ENCODE measurements at regions of chr16 and their contacts with region 1.

Region 1: DNA sequence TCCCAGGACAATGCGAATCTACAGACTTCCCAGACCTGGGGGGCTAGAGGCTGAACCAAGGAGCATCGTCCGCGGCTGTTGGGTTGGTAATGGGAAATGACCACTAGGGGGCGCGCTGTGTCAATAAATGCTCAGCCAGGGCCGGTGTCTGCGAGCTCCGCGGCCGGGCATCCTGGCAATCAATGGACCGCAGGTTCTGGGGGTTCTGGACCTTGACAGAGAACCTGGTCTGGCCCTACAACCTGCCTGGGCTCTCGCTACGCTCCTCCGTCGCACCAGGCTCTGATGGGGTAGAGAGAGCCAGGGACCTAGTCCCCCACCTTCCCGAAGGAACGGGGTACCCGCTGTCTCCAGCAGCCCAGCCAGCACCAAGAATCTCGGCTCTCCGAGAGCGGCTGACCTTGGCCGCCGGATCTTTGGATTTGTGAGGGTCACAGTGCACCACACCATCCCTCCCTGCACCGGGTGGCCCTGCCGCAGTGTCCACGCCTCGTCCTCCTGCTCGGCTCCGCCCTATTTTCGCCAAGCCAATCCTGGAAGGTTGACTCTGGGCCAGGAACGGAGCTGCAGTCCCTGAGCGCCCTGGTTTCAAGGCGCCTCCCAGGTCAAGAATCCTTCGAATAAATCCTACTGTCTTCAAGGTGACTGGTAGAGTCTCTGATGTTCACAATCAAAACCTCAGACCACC is 20.4 kb upstream of the BEAN1 start:
- DNase-seq: peak; percentile 90
- H3K4me3 ChIP-seq: peak overlapping the region; percentile 77 to 82
- H3K27ac ChIP-seq: peak overlapping the region; percentile 56 to 60
- H3K4me1 ChIP-seq: peaks cover 6 to 15% of the 10 kb centered on the region in 2 experiments; a peak in 3 of 4 replicates
- H3K27me3 ChIP-seq: no peaks in the 10 kb centered on the region
- CTCF ChIP-seq: peak; percentile 84
- EP300 ChIP-seq: no peak
- RAD21 ChIP-seq: peak; percentile 93

Region 2: GRCh38 chr16:66223176-66223780 is 183.4 kb before region 1 on chr16:
- CTCF ChIA-PET with region 1: no interaction called
- POLR2A ChIA-PET with region 1: no interaction called
- DNase-seq: no peak
- H3K4me3 ChIP-seq: no peak overlapping the region
- H3K27ac ChIP-seq: no peak overlapping the region
- H3K4me1 ChIP-seq: no peaks in the 10 kb centered on the region
- H3K27me3 ChIP-seq: peaks cover 4% of the 10 kb centered on the region; the same call in 1 of the 2 replicates
- CTCF ChIP-seq: no peak
- EP300 ChIP-seq: no peak
- RAD21 ChIP-seq: no peak

Region 3: DNA sequence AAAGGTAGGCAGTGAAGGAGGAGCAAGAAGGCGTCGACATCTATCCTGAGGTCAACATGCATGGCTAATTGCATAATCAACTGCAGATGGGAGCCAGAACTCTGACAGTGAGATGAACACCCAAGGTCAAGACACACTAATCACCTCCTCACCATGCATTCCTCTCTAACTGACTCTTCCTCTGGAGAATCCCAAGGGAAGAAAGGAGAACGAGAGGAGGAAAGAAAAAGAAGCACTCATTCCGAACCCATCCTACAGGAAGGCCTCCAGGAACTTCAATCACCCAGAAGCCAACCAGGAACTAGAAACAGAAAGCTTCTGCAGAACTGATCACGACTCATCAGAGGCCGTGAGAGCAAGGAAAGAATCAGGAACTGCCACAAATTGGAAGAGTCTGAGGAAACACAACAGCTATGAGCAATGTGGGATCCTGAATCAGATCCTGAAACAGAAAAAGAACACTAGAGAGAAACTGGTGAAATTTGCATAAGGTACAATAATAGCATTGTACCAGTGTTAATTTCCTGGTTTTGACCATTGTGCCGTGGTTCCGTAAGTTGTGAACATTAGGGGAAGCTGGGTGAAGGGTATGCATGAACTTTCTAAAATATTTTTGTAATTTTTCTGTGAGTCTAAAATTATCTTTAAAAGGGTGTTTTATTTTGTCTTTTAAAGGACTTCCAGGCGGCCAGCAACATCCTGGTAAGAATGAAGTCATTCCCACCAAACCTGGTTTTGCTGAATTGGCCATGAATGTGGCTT is 10.4 kb after region 1 on chr16:
- CTCF ChIA-PET with region 1: interaction called, 14 read pairs
- POLR2A ChIA-PET with region 1: no interaction called
- DNase-seq: no peak
- H3K4me3 ChIP-seq: no peak overlapping the region
- H3K27ac ChIP-seq: no peak overlapping the region
- H3K4me1 ChIP-seq: no peaks in the 10 kb centered on the region
- H3K27me3 ChIP-seq: no peaks in the 10 kb centered on the region
- CTCF ChIP-seq: no peak
- EP300 ChIP-seq: no peak
- RAD21 ChIP-seq: no peak

Region 4: GRCh38 chr16:66455970-66456369 is 49.3 kb after region 1 on chr16:
- CTCF ChIA-PET with region 1: interaction called, 11 read pairs
- POLR2A ChIA-PET with region 1: no interaction called
- DNase-seq: no peak
- H3K4me3 ChIP-seq: no peak overlapping the region
- H3K27ac ChIP-seq: no peak overlapping the region
- H3K4me1 ChIP-seq: no peaks in the 10 kb centered on the region
- H3K27me3 ChIP-seq: peaks cover 6% of the 10 kb centered on the region; the same call in 1 of the 2 replicates
- CTCF ChIP-seq: no peak
- EP300 ChIP-seq: no peak
- RAD21 ChIP-seq: no peak

Region 5: DNA sequence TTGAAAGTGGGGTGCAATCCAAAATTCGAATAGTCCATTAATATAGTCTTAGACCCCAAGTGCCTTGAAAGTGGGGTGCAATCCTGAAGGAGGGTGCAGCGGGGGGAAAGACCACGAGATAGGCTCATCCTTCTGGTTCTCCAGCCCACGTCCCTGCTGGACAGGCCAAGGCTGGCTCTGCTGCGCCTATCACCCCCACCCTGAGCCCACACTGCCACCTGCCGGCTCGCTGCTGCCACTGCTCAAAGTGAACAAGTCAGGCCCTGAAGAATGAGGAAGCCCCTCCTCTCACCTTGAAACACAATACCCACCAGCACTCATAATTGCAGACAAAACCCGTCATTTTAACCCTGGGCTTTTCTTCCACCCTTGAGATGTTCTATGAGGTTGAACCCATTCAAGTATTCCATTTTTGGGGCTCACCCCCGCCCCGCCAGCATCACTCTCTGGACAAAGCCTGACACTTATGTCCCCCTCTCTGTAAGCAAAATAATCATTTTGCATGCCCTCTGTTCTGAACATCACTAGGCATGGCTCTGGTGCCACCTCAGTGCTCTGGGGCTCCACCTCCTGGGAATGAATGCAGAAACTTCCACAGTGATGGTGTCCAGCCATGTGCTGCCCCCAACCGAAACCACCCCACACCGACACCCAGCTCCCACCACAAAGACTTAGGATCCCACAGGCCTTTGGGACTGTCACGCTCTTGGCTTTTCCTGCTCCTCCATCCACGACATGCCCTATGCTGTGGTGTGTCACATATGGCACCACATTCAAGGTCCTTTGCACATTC is 77.2 kb after region 1 on chr16:
- CTCF ChIA-PET with region 1: interaction called, 299 read pairs
- POLR2A ChIA-PET with region 1: interaction called, 3 read pairs
- DNase-seq: peak; percentile 90
- H3K4me3 ChIP-seq: peak overlapping the region in 1 of 2 experiments; percentile 41; a peak in 1 of 4 replicates
- H3K27ac ChIP-seq: no peak overlapping the region
- H3K4me1 ChIP-seq: peaks cover 10% of the 10 kb centered on the region in 2 experiments; a peak in 2 of 4 replicates
- H3K27me3 ChIP-seq: no peaks in the 10 kb centered on the region
- CTCF ChIP-seq: peak; percentile 95
- EP300 ChIP-seq: no peak
- RAD21 ChIP-seq: peak; percentile 93

Region 6: DNA sequence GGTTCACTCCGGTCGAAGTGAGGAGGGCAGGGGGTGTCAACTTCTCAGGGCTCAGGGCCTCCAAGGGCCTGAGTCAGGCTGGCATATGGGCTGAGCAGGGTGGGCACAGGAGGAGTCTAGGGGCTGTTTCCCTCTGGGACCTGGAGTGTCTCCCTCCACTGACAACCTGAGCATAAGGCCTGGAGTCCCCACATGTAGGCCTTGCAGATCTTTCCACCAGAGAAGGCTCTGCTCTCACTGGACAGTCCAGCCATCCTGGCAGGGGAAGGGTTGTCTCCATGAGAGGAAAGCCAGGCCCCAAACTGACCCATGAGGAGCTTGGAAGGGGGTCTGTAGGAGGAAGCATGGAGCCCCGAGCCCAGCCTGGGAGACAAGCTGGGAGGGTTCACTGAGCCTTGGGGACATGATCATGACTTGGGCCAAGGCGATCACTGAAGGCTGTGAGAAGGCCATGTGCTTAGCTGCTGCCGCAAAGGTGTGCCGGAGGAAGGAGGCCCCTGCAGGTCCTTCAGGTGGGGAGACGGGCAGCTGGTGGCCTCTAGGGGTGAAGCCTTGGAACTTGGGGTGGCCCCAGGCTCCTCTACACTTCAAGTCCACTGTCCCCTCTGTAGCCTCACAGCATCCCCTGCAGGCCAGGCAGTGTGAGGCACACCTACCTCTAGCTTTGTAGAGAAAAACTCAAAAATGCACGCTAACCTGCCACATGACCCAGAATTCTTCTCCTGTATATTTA is 182.5 kb after region 1 on chr16:
- CTCF ChIA-PET with region 1: interaction called, 15 read pairs
- POLR2A ChIA-PET with region 1: no interaction called
- DNase-seq: no peak
- H3K4me3 ChIP-seq: no peak overlapping the region
- H3K27ac ChIP-seq: no peak overlapping the region
- H3K4me1 ChIP-seq: no peaks in the 10 kb centered on the region
- H3K27me3 ChIP-seq: no peaks in the 10 kb centered on the region
- CTCF ChIP-seq: peak; percentile 58
- EP300 ChIP-seq: no peak
- RAD21 ChIP-seq: peak; percentile 57